Prostate gland (tissue), 2 donors: ENCODE measurements at regions of chr16 and their contacts with region 1.

Region 1: GRCh38 chr16:23556881-23557778 is at the starts of genes EARS2 and UBFD1:
- DNase-seq: peak; percentile 97
- H3K4me3 ChIP-seq: peak within 1 kb of the TSS; percentile 68 to 99
- H3K27ac ChIP-seq: peak within 1 kb of the TSS; percentile 83 to 89
- H3K4me1 ChIP-seq: no peaks in the 10 kb centered on the region
- H3K27me3 ChIP-seq: no peaks in the 10 kb centered on the region
- CTCF ChIP-seq: peak; percentile 73 to 99 (median 98)
- POLR2A ChIP-seq: peak; percentile 53
- total RNA-seq, gene EARS2: 40.3 to 60.2 TPM
- total RNA-seq, gene UBFD1: 92.2 to 218 TPM

Region 2: DNA sequence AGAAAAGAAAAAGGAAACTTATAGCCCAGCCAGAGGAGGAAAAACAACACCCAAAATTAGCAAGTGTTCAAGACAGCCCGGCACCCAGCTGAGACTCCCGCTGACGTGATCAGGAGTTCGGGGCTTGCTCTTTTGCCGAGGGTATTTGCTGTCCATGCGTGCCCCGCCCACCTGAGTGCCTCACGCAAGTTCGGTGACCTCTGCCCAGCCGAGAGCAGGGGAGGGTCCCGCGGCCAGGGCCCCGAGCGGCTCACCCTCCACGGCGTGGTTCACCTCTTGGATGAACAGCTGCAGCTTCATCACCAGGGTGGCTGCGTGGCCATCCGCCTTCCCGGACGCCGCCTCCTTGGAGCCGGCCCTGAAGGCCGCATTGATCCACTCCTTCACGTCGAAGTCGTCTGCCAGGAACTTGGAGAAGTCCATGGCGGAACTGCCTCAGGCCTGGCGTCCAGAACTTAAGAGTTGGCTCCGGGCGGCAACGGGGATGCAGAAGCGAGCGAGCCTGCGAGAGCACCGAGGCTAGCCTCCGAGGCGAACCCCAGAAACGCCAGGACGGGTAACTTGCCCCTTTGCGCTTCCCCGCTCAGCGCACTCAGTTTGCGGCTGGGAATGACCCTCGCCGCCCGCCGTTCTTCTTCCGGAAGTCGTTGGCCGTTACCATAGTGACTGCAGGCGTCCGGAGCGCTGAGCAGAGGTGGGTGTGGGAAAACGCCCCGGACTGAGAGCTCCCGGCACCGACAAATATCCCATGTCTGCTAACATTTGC is 104.4 kb before region 1 on chr16 and contains the start of gene COG7:
- intact Hi-C with region 1: loop called (anchors 5 kb)
- DNase-seq: peak; percentile 75
- H3K4me3 ChIP-seq: peak within 1 kb of the TSS; percentile 68 to 84
- H3K27ac ChIP-seq: peak within 1 kb of the TSS; percentile 72 to 80
- H3K4me1 ChIP-seq: no peaks in the 10 kb centered on the region
- H3K27me3 ChIP-seq: no peaks in the 10 kb centered on the region
- CTCF ChIP-seq: peak in 1 of 4 experiments; percentile 12
- POLR2A ChIP-seq: peak; percentile 10
- total RNA-seq, gene COG7: 34.0 to 35.3 TPM

Region 3: GRCh38 chr16:23504451-23505179 is 52.5 kb before region 1 on chr16:
- intact Hi-C with region 1: loop called (anchors 5 kb)
- DNase-seq: no peak
- H3K4me3 ChIP-seq: no peak overlapping the region
- H3K27ac ChIP-seq: peak overlapping the region in 1 of 2 donors; percentile 9
- H3K4me1 ChIP-seq: peaks cover 7% of the 10 kb centered on the region
- H3K27me3 ChIP-seq: no peaks in the 10 kb centered on the region
- CTCF ChIP-seq: no peak
- POLR2A ChIP-seq: peak; percentile 16